Transverse colon (tissue), 4 donors: ENCODE measurements at regions of chrX and their contacts with region 1.

Region 1: DNA sequence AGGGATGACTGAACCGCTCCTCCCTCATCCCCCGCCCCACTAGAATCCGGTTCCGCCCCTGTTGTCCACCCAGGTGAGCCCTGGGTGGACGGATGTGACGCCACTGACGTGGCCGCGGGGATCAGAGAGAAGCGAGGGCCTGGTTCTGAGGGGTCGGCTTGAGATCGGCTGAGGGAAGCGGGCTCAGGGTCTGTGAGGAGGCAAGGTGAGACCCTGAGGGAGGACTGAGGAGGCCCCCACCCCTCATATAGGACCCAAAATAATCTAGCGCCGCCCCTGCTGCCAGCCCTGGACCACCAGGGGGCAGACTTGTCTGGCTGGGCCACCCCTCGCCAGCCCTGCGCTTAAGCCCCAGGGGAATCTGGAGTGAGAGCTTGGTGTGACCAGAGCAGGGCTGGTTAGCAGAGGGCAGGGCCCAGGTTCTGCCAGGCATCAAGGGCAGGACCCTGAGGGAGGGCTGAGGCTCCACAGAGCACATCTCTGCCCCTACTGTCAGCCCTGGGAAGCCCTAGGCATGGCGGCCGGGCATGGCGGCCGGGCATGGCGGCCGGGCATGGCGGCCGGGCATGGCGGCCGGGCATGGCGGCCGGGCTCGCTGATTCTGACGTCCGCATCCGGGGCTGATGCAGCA is at the start of gene MAGEA8:
- DNase-seq: no peak
- H3K4me3 ChIP-seq: no peak within 1 kb of the TSS
- H3K27ac ChIP-seq: no peak within 1 kb of the TSS
- H3K4me1 ChIP-seq: no peaks in the 10 kb centered on the region
- H3K27me3 ChIP-seq: no peaks in the 10 kb centered on the region
- CTCF ChIP-seq: no peak
- EP300 ChIP-seq: no peak
- POLR2A ChIP-seq: no peak
- total RNA-seq, gene MAGEA8: not detected

Region 2: DNA sequence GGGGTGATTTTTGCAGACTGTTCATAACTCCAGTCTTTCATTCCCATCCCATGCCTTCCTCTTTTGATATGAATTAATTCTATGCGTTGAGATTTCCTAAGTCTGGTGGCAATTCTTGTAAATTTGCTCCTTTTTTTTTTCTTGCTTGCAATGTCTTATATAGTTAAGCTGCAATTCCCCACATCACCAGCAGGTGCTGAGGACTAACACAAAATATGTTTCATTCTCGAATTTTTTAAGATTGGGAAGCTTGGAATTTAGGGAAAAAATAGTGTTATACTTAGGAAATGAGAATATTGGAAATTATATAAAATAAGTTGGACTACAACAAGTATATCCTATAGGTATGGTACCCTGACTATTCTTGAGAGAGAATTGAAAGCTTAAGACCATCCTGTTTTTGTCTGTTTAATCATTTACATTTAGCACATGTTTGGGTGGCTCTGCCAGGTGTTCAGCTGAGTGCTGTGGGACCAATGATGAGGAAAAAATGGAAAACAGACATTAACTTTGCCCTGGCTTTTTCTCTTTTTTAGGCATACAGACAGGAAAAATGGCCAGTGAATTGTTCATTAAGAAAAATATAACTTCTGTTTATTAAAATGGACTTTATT is 1350.6 kb before region 1 on chrX:
- in situ Hi-C with region 1: no loop called
- intact Hi-C with region 1: loop called (anchors 5 kb)
- DNase-seq: no peak
- H3K4me3 ChIP-seq: no peak overlapping the region
- H3K27ac ChIP-seq: no peak overlapping the region
- H3K4me1 ChIP-seq: no peaks in the 10 kb centered on the region
- H3K27me3 ChIP-seq: no peaks in the 10 kb centered on the region
- CTCF ChIP-seq: peak in 4 of 5 experiments; percentile 25 to 57 (median 50)
- EP300 ChIP-seq: no peak
- POLR2A ChIP-seq: no peak

Region 3: DNA sequence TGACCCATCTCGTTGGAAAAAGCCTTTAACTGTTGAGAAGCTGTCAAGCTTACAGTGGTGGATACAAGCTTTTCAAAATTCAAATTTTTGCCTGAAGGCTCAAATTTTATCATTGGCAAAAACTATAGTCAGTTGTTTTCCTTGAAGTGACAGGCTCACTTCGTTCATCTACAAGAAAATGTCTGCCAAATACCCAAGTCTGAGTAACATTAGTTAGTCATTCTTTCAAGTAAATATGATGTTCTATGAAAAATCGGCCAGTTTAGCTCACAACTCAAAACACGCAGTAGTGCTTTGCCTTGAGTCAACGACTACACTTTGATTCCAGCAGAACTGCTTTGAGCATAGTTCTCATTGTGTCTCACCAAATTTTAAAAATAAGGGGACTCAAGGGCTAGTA is 311.6 kb after region 1 on chrX:
- in situ Hi-C with region 1: no loop called
- intact Hi-C with region 1: no loop called
- DNase-seq: no peak
- H3K4me3 ChIP-seq: no peak overlapping the region
- H3K27ac ChIP-seq: no peak overlapping the region
- H3K4me1 ChIP-seq: no peaks in the 10 kb centered on the region
- H3K27me3 ChIP-seq: no peaks in the 10 kb centered on the region
- CTCF ChIP-seq: no peak
- EP300 ChIP-seq: no peak
- POLR2A ChIP-seq: no peak